ENCODE measurements at regions of chr3 and their contacts with region 1.

Region 1: GRCh38 chr3:53938645-53939044 is 47.0 kb upstream of the SELENOK start:
- DNase-seq: no peak

Region 2: DNA sequence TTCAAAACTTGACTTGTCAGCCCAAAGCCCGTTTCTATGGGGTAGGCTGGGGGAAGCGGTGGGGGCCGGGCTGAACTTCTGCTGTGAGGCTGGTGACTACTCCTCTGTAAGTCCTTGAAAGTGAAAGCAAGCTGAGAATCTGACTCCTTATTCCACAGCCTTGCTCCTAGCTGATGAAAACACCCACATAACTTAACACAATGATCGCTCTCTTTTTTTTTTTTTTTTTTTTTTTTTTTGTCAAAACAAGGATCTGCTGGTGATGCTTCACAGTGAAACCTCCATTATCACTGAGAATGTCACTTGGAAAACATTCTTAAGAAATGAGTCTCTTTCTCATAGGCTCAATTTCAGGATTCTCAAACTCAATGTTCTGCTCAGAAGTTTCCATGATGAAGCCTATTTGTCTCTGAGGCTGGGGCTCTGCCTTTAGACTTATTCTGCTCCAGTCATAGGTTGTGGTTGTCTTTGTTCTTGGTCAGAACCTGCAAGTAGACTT is 651.5 kb before region 1 on chr3:
- intact Hi-C with region 1: no loop called
- DNase-seq: no peak

Region 3: DNA sequence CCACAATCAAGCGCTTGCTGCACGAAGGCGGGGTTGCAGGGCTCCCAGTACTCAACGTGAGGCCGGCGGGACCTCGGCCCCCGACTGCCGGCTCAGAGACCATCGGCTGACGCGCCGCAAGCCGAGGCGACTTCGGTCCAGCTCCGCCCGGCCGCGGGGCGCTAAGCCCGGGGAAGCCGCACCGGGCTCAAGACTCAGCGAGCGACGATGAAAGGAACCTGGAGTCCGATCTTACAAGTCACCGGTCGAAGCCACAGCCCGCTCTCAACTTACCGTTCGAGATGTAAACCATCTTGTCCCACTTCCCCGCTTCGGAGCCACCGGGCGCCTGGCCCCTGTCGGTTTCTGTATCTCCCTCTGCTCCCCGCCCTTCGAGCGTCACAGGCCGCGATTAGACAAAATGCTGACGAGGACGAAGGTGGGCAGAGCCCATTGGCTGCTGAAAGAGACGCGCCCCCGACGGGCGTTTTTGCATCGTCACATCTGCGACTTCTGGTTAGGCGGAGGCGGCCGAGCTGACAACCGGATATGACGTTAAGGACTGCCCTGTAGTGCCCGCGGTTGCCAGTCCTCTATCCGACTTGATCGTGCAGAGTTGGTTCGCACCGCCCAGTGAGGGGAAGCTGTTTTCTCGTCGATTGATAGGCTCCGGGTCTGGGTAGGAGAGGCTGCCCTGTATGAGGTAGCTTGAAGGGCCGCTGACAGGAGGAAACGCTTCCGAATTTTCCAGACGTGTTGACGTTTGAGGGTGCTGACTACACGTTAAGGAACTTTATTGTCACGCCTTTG is 47.0 kb before region 1 on chr3 and contains the start of gene SELENOK:
- intact Hi-C with region 1: no loop called
- DNase-seq: peak; percentile 99
- total RNA-seq, gene SELENOK: 89.3 TPM

Region 4: DNA sequence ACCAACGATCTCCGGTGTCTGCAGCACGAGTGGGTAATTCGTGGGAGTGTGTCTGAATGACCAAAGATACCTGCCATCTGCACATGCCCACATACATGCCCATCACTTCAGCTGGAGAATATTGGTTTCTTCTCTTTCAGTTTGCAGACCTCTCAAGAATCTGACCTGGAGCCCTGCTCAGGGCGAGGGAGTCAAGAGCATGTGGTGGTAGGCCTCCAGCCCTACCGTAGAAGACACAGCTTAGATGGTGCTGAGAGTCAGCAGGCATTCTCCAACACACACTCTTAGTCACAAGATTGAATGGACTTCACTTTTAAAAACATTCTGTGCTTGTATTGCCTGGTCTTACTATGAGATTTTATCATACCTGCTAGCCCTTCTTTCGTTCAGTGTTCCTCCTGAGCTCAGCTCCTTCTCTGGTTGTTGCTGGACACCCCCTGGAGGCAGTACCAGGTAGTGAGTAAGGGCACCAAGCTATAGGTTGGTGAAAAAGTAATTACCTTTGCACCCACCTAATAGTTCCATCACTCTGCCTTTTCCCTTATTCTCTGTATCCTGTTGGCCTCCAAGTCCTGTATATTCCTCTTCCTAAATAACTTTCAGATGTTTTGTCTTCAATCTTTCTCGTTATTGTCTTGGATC is 435.7 kb after region 1 on chr3:
- intact Hi-C with region 1: loop called (anchors 5 kb)
- DNase-seq: no peak

Measured in cardiac septum (tissue), 1 donor.